Activated CD4-positive, alpha-beta T cell treated with anti-CD3 and anti-CD28 coated beads, Interleukin-2, amount 10 ng/mL, durations not matched to agents 24 days and 14 days (primary cell): ENCODE measurements at regions of chr10 and their contacts with region 1.

Region 1: GRCh38 chr10:80924063-80924952 is 386.6 kb downstream of the SH2D4B start:
- DNase-seq: peak; percentile 70
- H3K4me3 Mint-ChIP-seq: no peak overlapping the region
- H3K27ac Mint-ChIP-seq: no peak overlapping the region
- H3K4me1 Mint-ChIP-seq: no peaks in the 10 kb centered on the region
- H3K27me3 Mint-ChIP-seq: peaks cover 10% of the 10 kb centered on the region

Region 2: DNA sequence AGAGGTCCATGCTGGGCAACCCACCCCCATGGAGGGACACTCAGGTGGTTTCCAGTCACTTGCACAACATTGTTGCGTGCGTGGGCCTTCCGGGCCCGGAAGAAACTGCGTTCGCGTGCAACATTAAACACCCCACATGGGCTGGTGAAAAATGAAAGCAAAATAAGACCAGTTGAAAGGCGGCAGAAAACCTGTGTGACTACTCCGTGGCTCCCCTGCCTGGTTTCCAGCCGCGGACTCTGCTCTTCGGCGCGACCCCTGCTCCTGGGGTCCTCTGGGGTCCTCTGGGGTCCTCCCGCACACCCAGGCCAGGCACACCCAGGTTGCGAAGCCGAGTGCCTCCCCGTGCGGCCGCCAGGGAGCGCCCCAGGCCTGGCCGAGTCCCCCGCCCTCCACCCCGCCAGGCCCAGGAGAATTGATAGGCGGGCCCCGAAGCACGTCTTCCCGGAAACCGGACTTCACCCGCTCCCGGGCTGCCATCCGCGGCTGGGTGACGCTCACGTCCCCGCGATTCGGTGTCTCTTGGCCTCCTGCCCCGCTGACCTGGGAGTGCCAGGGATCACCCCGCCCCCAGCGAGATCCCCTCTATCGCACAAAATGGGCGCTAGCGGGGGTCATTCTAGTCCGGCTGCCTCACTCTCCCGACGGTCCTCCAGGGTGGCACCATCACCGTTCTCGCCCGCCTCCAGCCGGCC is 388.5 kb before region 1 on chr10:
- intact Hi-C with region 1: loop called (anchors 10 kb)
- DNase-seq: peak; percentile 92
- H3K4me3 Mint-ChIP-seq: peak overlapping the region; percentile 98
- H3K27ac Mint-ChIP-seq: peak overlapping the region; percentile 99
- H3K4me1 Mint-ChIP-seq: peaks cover 32% of the 10 kb centered on the region
- H3K27me3 Mint-ChIP-seq: no peaks in the 10 kb centered on the region

Region 3: GRCh38 chr10:80699602-80700039 is 224.7 kb before region 1 on chr10:
- intact Hi-C with region 1: loop called (anchors 1 kb)
- DNase-seq: peak; percentile 90
- H3K4me3 Mint-ChIP-seq: no peak overlapping the region
- H3K27ac Mint-ChIP-seq: no peak overlapping the region
- H3K4me1 Mint-ChIP-seq: no peaks in the 10 kb centered on the region
- H3K27me3 Mint-ChIP-seq: no peaks in the 10 kb centered on the region

Region 4: DNA sequence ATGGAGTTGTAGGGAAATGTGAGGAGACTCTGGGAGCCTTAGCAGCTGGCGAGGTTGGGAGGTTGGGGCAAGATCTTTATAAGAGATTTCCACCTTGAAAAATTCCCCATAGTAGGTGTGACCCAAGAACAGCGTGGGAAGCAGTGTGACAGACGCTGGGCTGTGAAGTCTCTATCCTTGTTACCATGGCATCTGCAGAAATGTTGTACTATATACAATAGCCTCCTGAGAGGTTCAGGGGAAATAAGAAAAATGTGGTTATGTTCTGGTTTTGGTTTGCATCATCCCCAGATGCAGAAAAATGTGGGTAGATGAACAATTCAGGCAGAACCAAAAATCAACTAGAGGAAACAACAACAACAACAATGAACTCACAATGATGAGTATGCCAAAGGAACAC is 111.9 kb after region 1 on chr10:
- intact Hi-C with region 1: no loop called
- DNase-seq: no peak
- H3K4me3 Mint-ChIP-seq: no peak overlapping the region
- H3K27ac Mint-ChIP-seq: no peak overlapping the region
- H3K4me1 Mint-ChIP-seq: no peaks in the 10 kb centered on the region
- H3K27me3 Mint-ChIP-seq: peaks cover 2% of the 10 kb centered on the region

Region 5: GRCh38 chr10:81472927-81473470 is 548.7 kb after region 1 on chr10:
- intact Hi-C with region 1: no loop called
- DNase-seq: no peak
- H3K4me3 Mint-ChIP-seq: no peak overlapping the region
- H3K27ac Mint-ChIP-seq: no peak overlapping the region
- H3K4me1 Mint-ChIP-seq: no peaks in the 10 kb centered on the region
- H3K27me3 Mint-ChIP-seq: no peaks in the 10 kb centered on the region